CD8-positive, alpha-beta T cell (primary cell): ENCODE measurements at regions of chr16 and their contacts with region 1.

Region 1: GRCh38 chr16:68074850-68075555 is 10.2 kb upstream of the NFATC3 start:
- DNase-seq: peak in 8 of 9 experiments; percentile 58 to 85 (median 77)
- ATAC-seq: peak; percentile 69
- H3K4me3 ChIP-seq: peak overlapping the region; percentile 1 to 19
- H3K4me3 Mint-ChIP-seq: peak overlapping the region; percentile 76
- H3K27ac ChIP-seq: peak overlapping the region in 1 of 2 experiments; percentile 64
- H3K27ac Mint-ChIP-seq: peak overlapping the region; percentile 92
- H3K4me1 ChIP-seq: peaks cover 92% of the 10 kb centered on the region
- H3K4me1 Mint-ChIP-seq: peaks cover 87% of the 10 kb centered on the region
- H3K27me3 ChIP-seq: no peaks in the 10 kb centered on the region
- H3K27me3 Mint-ChIP-seq: no peaks in the 10 kb centered on the region
- CTCF ChIP-seq: no peak

Region 2: GRCh38 chr16:68005786-68006286 is 69.2 kb before region 1 on chr16:
- CTCF ChIA-PET with region 1: interaction called, 3 read pairs
- POLR2A ChIA-PET with region 1: interaction called, 10 read pairs
- intact Hi-C with region 1: loop called in 1 of 2 experiments (anchors 5 kb)
- DNase-seq: peak; percentile 39 to 85 (median 67)
- ATAC-seq: peak; percentile 96
- H3K4me3 ChIP-seq: no peak overlapping the region
- H3K4me3 Mint-ChIP-seq: peak overlapping the region; percentile 51
- H3K27ac ChIP-seq: peak overlapping the region; percentile 75 to 85
- H3K27ac Mint-ChIP-seq: peak overlapping the region; percentile 99
- H3K4me1 ChIP-seq: peaks cover 33% of the 10 kb centered on the region
- H3K4me1 Mint-ChIP-seq: peaks cover 39% of the 10 kb centered on the region
- H3K27me3 ChIP-seq: no peaks in the 10 kb centered on the region
- H3K27me3 Mint-ChIP-seq: no peaks in the 10 kb centered on the region
- CTCF ChIP-seq: no peak

Region 3: DNA sequence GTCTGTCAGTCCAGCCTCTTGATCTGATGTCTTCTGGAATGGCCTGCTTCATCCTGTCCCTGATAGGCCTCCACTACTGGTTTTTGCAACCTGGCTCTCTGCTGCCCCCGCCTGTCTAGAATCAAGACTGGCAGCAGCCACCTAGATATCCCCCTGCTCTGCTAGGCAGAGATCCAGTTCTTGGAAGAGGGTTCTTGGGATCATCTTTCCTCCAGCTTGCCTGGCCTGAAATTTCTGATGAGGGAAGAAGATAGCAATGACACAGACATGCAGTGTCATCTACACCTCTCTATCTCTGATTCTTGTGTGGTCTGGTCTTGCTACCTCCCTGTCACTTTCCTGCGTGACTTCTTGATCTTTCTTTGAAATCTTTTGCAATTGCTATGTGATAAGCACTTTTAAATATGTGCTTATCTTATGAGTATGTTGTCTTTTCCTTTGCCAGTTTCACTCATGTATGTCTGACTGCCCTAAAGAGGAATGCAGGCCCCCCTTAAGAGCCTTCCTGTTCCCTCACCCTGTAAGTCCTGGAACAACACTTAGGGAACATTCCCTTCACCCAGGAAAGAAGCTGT is 10.1 kb before region 1 on chr16:
- CTCF ChIA-PET with region 1: interaction called, 46 read pairs
- POLR2A ChIA-PET with region 1: interaction called, 27 read pairs
- intact Hi-C with region 1: loop called in 1 of 2 experiments (anchors 1 kb)
- DNase-seq: peak; percentile 39 to 86 (median 73)
- ATAC-seq: peak; percentile 82
- H3K4me3 ChIP-seq: no peak overlapping the region
- H3K4me3 Mint-ChIP-seq: no peak overlapping the region
- H3K27ac ChIP-seq: peak overlapping the region in 1 of 2 experiments; percentile 58
- H3K27ac Mint-ChIP-seq: peak overlapping the region; percentile 92
- H3K4me1 ChIP-seq: peaks cover 72% of the 10 kb centered on the region
- H3K4me1 Mint-ChIP-seq: peaks cover 76% of the 10 kb centered on the region
- H3K27me3 ChIP-seq: no peaks in the 10 kb centered on the region
- H3K27me3 Mint-ChIP-seq: no peaks in the 10 kb centered on the region
- CTCF ChIP-seq: peak; percentile 85

Region 4: DNA sequence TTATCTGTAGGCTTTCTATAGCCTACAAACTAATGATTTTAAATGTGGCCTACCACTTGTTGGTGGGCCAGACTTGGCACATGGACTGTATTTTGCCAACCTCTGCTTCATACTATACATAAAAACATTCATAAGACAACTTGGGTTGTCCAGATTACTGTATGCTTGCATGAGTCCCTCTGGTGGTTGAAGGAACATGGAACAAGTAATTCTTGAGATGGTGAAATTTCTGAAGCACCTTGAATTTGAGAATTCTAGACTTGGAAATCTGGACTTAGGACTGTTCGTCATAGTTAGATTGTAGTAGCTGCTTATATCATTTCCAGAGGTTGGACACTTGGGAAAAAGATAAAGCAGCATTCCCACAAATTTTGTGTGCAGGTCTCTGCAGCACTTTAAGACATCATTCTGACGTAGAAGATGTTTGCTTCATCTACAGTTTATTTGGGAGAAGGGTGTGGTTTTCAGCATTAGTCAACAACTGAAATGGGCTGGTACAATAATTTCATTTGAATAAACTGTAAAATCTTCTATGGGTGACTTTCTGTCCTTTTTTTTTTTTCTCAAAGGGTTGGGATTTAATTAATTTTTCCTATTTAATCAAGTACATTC is 41.4 kb after region 1 on chr16:
- CTCF ChIA-PET with region 1: interaction called, 5 read pairs
- POLR2A ChIA-PET with region 1: no interaction called
- intact Hi-C with region 1: loop called in 1 of 2 experiments (anchors 5 kb)
- DNase-seq: peak in 2 of 9 experiments; percentile 59 to 72
- ATAC-seq: peak; percentile 75
- H3K4me3 ChIP-seq: no peak overlapping the region
- H3K4me3 Mint-ChIP-seq: peak overlapping the region; percentile 51
- H3K27ac ChIP-seq: no peak overlapping the region
- H3K27ac Mint-ChIP-seq: peak overlapping the region; percentile 67
- H3K4me1 ChIP-seq: peaks cover 88% of the 10 kb centered on the region
- H3K4me1 Mint-ChIP-seq: peaks cover 84% of the 10 kb centered on the region
- H3K27me3 ChIP-seq: no peaks in the 10 kb centered on the region
- H3K27me3 Mint-ChIP-seq: no peaks in the 10 kb centered on the region
- CTCF ChIP-seq: peak; percentile 77

Region 5: DNA sequence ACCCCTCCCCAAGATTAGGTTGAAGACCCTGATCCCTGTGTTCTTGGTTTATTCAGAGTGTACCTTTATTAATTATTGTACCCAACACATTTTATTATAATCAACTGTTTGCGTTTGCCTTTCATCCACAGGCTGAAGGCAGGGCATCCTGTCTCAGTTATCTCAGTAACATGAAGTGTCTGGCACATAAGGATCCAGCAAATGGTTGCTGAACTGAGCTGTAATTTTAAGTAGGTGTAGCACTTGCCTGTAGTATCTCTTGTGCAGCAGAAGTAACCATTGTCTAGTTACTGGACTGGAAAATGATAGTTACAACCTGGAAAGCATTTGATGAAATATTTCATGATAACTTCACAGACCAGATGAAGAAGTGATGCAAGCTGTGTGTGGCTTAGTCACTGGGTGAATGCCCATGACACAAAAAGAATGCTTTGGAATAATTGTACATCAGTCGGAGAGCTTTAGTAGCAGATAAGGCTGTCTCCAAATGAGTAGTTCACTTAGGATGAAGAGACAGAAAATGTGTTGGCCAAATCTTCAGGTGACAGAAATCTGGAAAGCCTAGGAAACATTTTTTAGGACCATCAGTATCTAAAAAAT is 104.3 kb after region 1 on chr16:
- CTCF ChIA-PET with region 1: no interaction called
- POLR2A ChIA-PET with region 1: no interaction called
- intact Hi-C with region 1: no loop called
- DNase-seq: no peak
- ATAC-seq: no peak
- H3K4me3 ChIP-seq: no peak overlapping the region
- H3K4me3 Mint-ChIP-seq: no peak overlapping the region
- H3K27ac ChIP-seq: no peak overlapping the region
- H3K27ac Mint-ChIP-seq: peak overlapping the region; percentile 73
- H3K4me1 ChIP-seq: no peaks in the 10 kb centered on the region
- H3K4me1 Mint-ChIP-seq: peaks cover 11% of the 10 kb centered on the region
- H3K27me3 ChIP-seq: no peaks in the 10 kb centered on the region
- H3K27me3 Mint-ChIP-seq: no peaks in the 10 kb centered on the region
- CTCF ChIP-seq: no peak